Breast epithelium (tissue), 4 donors: ENCODE measurements at regions of chr5 and their contacts with region 1.

Region 1: GRCh38 chr5:110651512-110651911 is 75.0 kb downstream of the TMEM232 start:
- DNase-seq: no peak
- H3K4me3 ChIP-seq: no peak overlapping the region
- H3K27ac ChIP-seq: no peak overlapping the region
- H3K4me1 ChIP-seq: no peaks in the 10 kb centered on the region
- H3K27me3 ChIP-seq: no peaks in the 10 kb centered on the region
- CTCF ChIP-seq: no peak
- POLR2A ChIP-seq: no peak

Region 2: DNA sequence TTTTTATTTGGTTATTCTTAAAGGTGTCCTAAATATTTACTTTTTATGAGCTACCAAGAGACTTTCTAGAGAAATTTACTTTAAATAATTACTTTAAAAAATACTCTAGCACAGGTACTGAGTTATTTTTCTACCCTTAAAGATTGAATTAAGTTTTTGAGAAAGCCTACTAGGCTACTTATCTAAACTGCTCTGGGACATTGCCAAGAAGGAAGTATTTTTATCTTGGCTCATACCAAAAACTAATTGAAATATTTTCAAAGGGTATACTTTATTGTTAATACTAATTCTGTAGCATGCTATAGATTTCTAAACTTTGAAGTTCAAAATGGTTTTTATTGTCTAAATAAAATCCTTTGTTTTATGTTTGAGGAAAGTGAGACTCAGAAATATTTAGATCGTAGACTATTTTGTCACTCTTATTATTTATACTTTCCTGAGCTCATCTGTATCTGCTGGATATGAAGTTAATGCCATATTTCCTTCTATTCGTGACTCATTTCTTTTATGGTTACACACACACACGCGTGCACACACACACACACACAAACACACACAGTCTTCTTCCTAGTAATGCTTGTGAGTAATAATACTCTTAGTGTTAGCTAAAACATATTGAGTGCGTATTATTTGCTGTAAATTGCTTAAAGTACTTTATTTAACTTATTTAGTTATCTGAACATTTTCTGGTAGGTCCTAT is 872.3 kb before region 1 on chr5:
- intact Hi-C with region 1: no loop called
- DNase-seq: no peak
- H3K4me3 ChIP-seq: no peak overlapping the region
- H3K27ac ChIP-seq: no peak overlapping the region
- H3K4me1 ChIP-seq: no peaks in the 10 kb centered on the region
- H3K27me3 ChIP-seq: no peaks in the 10 kb centered on the region
- CTCF ChIP-seq: no peak
- POLR2A ChIP-seq: no peak

Region 3: DNA sequence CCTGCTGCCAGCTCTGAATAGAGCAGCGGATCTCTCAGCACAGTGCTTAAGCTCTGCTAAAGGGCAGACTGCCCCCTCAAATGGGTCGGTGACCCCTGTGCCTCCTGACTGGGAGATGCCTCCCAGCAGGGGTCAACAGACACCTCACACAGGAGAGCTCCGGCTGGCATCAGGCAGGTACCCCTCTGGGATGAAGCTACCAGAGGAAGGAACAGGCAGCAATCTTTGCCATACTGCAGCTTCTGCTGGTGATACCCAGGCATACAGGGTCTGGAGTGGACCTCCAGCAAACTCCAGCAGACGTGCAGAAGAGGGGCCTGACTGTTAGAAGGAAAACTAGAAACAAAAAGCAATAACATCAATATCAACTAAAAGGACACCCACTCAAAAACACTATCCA is 56.6 kb before region 1 on chr5:
- intact Hi-C with region 1: loop called (anchors 2 kb)
- DNase-seq: no peak
- H3K4me3 ChIP-seq: no peak overlapping the region
- H3K27ac ChIP-seq: no peak overlapping the region
- H3K4me1 ChIP-seq: no peaks in the 10 kb centered on the region
- H3K27me3 ChIP-seq: no peaks in the 10 kb centered on the region
- CTCF ChIP-seq: no peak
- POLR2A ChIP-seq: no peak